ENCODE measurements at regions of chr15 and their contacts with region 1.

Region 1: GRCh38 chr15:50363612-50364011 is 8.6 kb upstream of the GABPB1 start:
- DNase-seq: no peak
- H3K4me3 ChIP-seq: no peak overlapping the region
- H3K27ac ChIP-seq: no peak overlapping the region
- H3K4me1 ChIP-seq: no peaks in the 10 kb centered on the region
- H3K27me3 ChIP-seq: no peaks in the 10 kb centered on the region
- CTCF ChIP-seq: no peak
- EP300 ChIP-seq: no peak
- POLR2A ChIP-seq: no peak
- RAD21 ChIP-seq: no peak

Region 2: DNA sequence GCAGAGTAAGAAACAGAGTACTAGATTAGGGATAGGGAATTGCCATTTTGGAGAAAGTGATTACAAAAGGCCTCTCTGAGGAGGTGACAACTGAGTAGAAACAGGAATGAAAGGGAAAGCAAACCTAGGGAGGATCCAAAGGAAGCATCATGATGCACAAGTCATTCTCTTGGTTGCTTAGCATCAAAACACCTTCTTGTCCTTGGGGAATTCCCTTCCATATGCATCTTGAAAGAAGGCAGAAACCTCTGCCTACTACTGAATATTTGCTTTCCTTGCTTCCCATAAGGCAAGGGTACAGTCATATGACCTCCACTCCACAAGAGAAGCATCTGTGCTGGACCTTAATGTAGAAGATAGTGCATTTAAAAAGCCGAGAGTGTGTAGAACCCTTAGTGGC is 32.7 kb before region 1 on chr15:
- CTCF ChIA-PET with region 1: no interaction called
- POLR2A ChIA-PET with region 1: no interaction called
- DNase-seq: no peak
- H3K4me3 ChIP-seq: no peak overlapping the region; a peak in 1 of 8 replicates
- H3K27ac ChIP-seq: peak overlapping the region; percentile 45; the same call in 1 of the 2 replicates
- H3K4me1 ChIP-seq: peaks cover 0 to 5% (median 1%) of the 10 kb centered on the region in 4 experiments; a peak in 3 of 7 replicates
- H3K27me3 ChIP-seq: peaks cover 0 to 1% (median 0%) of the 10 kb centered on the region in 4 experiments; a peak in 1 of 7 replicates
- CTCF ChIP-seq: no peak
- EP300 ChIP-seq: no peak
- POLR2A ChIP-seq: no peak
- RAD21 ChIP-seq: no peak

Region 3: GRCh38 chr15:50377867-50378751 is 14.5 kb after region 1 on chr15:
- CTCF ChIA-PET with region 1: no interaction called
- POLR2A ChIA-PET with region 1: interaction called, 17 read pairs
- DNase-seq: no peak
- H3K4me3 ChIP-seq: no peak overlapping the region
- H3K27ac ChIP-seq: no peak overlapping the region
- H3K4me1 ChIP-seq: no peaks in the 10 kb centered on the region
- H3K27me3 ChIP-seq: no peaks in the 10 kb centered on the region
- CTCF ChIP-seq: no peak
- EP300 ChIP-seq: no peak
- POLR2A ChIP-seq: no peak
- RAD21 ChIP-seq: no peak

Measured in H1 (cell line).